Aorta (tissue), 5 donors: ENCODE measurements at regions of chr11 and their contacts with region 1.

Region 1: GRCh38 chr11:3841426-3842350 is 929 bp upstream of the RHOG start:
- DNase-seq: peak; percentile 92 to 95
- ATAC-seq: peak; percentile 91
- H3K4me3 ChIP-seq: peak overlapping the region; percentile 97 to 99
- H3K27ac ChIP-seq: peak overlapping the region; percentile 82 to 91
- H3K4me1 ChIP-seq: no peaks in the 10 kb centered on the region
- H3K27me3 ChIP-seq: no peaks in the 10 kb centered on the region

Region 2: DNA sequence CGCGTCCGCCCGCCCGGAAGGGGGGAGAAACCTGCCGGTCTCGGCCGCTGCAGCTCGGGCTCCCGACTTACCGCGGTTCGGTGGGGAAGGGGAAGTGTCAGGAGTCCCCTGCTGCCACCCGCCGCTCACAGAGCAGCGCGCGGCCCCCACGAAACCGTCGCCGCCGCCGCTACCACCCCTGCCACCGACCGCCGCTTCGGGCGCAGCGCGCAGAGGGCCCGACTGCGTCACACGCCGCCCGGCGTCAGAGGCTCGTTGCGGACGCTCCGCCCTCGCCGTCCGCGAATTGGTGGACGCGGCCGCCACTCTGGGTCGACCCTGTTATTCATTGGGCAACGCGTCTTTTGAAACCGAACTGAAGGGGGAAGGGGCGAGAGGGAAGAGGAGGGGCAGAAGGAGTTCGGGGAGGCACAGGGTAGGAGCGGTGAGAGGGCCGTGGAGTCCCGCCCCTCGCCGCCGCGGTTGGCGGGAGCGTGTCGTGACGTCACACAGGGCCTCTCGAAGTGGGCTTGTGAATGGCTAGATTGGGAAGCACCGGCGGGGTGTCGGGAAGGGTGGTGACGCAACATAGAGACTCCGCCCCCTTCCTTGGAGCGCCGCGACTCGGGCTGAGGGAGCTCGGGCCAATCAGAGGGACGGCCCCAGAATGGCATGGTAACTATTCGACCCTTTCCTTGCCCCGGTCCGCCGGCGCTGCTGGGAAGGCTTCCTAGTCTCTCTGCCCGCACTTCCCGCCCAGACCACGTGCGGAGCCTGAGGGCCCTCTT is 44.2 kb before region 1 on chr11 and contains the start of gene NUP98:
- intact Hi-C with region 1: loop called (anchors 2 kb)
- DNase-seq: peak; percentile 100
- ATAC-seq: peak; percentile 98
- H3K4me3 ChIP-seq: peak within 1 kb of the TSS; percentile 92 to 93
- H3K27ac ChIP-seq: peak within 1 kb of the TSS; percentile 64 to 95
- H3K4me1 ChIP-seq: no peaks in the 10 kb centered on the region
- H3K27me3 ChIP-seq: no peaks in the 10 kb centered on the region
- total RNA-seq, gene NUP98: 72.7 to 78.6 TPM

Region 3: DNA sequence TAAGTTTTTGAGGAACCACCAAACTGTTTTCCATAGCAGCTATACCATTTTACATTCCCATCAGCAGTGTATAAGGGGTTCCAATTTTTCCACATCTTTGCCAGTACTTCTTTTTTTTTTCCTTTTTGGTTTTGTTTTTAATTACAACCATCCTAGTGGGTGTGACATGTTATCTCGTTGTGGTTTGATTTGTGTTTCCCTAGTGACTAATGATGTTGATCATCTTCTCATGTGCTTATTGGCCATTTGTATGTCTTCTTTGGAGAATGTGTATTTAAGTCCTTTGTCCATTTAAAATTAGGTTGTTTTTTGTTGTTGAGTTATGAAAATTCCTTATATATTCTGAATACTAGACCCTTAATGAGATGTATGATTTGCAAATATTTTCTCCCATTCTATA is 73.1 kb after region 1 on chr11:
- intact Hi-C with region 1: no loop called
- DNase-seq: no peak
- ATAC-seq: no peak
- H3K4me3 ChIP-seq: no peak overlapping the region
- H3K27ac ChIP-seq: no peak overlapping the region
- H3K4me1 ChIP-seq: peaks cover 0 to 2% of the 10 kb centered on the region in 2 donors
- H3K27me3 ChIP-seq: no peaks in the 10 kb centered on the region